ENCODE measurements at regions of chr2 and their contacts with region 1.

Region 1: DNA sequence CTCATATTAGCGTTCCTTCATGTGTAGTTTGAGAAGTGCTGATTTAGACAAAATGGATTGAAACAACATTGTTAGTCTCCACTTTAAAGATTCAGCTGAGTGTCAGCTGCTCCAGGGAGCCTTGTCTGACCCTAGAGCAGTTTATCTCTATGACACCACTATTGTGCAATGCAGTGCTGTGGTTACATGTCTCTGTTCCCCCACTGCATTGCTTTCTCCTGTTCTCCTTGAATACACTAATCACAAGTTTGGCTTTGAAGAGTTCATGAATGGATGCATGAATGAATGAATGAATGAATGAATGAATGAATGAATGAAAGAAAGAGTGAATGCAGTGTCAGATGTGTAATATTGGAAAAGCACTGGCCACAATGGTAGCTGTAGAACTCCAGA is 38.3 kb downstream of the GCG start:
- DNase-seq: no peak

Region 2: DNA sequence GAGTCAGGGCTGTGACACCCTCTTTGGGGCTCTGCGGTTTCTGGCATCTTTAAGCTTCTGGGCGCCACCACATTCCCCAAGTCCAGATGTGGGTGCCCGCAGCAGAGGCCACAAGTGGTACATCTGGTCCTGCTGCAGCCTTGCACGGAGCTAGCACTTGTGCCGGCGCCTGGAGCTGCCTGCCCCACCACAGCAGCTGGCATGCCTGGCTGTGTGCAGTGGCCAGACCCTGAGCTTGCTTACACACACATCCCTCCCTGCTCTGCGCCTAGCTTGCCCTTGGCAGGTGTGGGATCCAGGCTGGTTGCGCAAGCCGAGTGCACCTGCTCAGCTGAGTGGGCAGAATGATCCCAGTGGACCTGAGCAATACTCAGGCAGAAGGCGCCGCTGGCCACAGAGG is 462.2 kb before region 1 on chr2:
- intact Hi-C with region 1: no loop called
- DNase-seq: no peak

Region 3: GRCh38 chr2:162002623-162003240 is 111.0 kb before region 1 on chr2:
- intact Hi-C with region 1: loop called (anchors 5 kb)
- DNase-seq: no peak

Region 4: GRCh38 chr2:162153608-162154224 is 39.9 kb after region 1 on chr2:
- intact Hi-C with region 1: no loop called
- DNase-seq: peak in 41 of 42 donors; percentile 19 to 83 (median 64)

Measured in head of caudate nucleus (tissue), 42 donors.